ENCODE measurements at regions of chr2 and their contacts with region 1.

Region 1: GRCh38 chr2:133919285-133919684 is 334.6 kb upstream of the MGAT5 start:
- DNase-seq: no peak

Region 2: DNA sequence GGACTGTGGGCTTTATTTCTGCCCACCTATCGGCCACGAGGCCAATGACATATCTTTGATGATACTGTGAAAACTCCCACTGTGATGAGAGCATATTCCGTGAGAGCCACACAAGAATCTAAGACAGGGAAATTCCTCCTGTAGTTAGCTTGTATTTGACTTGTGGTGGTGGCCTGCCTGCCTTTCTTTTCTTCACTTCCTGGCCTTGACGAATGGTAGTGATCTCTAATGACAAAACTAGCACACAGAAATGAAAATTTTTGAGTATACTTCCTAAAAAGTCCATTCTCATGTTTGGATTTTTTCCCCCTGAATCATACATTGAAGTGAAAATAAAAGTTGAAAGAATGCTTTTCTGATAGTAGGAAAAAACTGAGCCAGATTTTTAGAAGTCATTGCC is 429.0 kb after region 1 on chr2:
- intact Hi-C with region 1: loop called in 1 of 2 experiments (anchors 10 kb)
- DNase-seq: no peak

Measured in posterior vena cava (tissue), 2 donors.